ENCODE measurements at regions of chr18 and their contacts with region 1.

Region 1: DNA sequence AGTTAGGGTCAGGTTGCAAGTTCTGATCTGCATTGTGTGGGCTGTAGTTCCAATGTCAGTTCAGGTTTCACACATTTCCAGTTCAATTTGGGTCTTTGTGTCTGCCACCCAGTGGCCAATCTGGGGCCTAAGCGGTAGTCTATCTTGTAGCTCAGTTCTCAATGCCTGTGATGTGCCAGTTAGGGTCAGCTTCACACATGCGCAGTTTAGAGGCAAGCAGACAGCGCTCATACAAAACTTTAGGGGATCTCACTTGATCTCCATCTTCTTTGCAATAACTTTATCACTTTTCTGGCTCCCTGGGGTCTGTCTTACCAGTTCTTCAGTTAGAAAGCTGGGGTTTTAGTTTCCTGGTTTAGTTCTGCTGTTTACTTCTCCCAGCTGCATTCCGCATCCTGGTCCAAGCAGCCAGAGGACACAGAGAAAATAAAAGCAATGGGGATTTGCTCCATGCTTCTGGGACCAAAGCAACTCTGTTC is 11.0 kb upstream of the ZNF24 start:
- DNase-seq: peak; percentile 68
- H3K4me3 Mint-ChIP-seq: no peak overlapping the region
- H3K27ac Mint-ChIP-seq: no peak overlapping the region
- H3K4me1 Mint-ChIP-seq: peaks cover 5% of the 10 kb centered on the region
- H3K27me3 Mint-ChIP-seq: no peaks in the 10 kb centered on the region

Region 2: GRCh38 chr18:34848695-34849094 is 506.5 kb before region 1 on chr18:
- CTCF ChIA-PET with region 1: no interaction called
- intact Hi-C with region 1: no loop called
- DNase-seq: no peak
- H3K4me3 Mint-ChIP-seq: no peak overlapping the region
- H3K27ac Mint-ChIP-seq: no peak overlapping the region
- H3K4me1 Mint-ChIP-seq: no peaks in the 10 kb centered on the region
- H3K27me3 Mint-ChIP-seq: peaks cover 17% of the 10 kb centered on the region

Region 3: DNA sequence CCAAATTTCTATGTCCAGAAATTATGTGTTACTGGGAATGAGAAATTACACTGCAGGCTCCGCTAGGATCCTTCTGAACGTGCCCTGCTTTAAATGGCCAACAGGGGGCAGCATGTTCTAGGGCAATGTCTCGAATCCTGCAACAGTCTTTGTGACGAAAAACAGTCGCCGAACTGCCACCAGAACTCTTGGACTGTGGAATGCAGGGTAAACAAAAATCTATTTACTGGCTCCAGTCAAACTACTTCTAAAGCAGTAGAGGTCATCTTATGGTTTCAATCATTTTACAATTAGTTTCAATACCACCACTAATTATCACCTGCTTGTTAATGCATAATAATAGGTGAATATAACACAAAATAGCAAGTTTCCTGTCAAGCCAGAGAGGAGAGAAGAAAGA is 124.1 kb before region 1 on chr18:
- CTCF ChIA-PET with region 1: interaction called, 17 read pairs
- intact Hi-C with region 1: loop called (anchors 1 kb)
- DNase-seq: peak; percentile 88
- H3K4me3 Mint-ChIP-seq: peak overlapping the region; percentile 56
- H3K27ac Mint-ChIP-seq: no peak overlapping the region
- H3K4me1 Mint-ChIP-seq: peaks cover 3% of the 10 kb centered on the region
- H3K27me3 Mint-ChIP-seq: peaks cover 3% of the 10 kb centered on the region

Region 4: GRCh38 chr18:35407871-35408481 is 52.8 kb after region 1 on chr18:
- CTCF ChIA-PET with region 1: no interaction called
- intact Hi-C with region 1: no loop called
- DNase-seq: peak; percentile 62
- H3K4me3 Mint-ChIP-seq: no peak overlapping the region
- H3K27ac Mint-ChIP-seq: no peak overlapping the region
- H3K4me1 Mint-ChIP-seq: peaks cover 17% of the 10 kb centered on the region
- H3K27me3 Mint-ChIP-seq: no peaks in the 10 kb centered on the region

Measured in activated naive CD4-positive, alpha-beta T cell treated with anti-CD3 and anti-CD28 coated beads for 36 hours (primary cell).